GM12878 (cell line): ENCODE measurements at regions of chr18 and their contacts with region 1.

Region 1: GRCh38 chr18:57881818-57882413 is 78.8 kb upstream of the ATP8B1 start:
- DNase-seq: peak; percentile 32
- ATAC-seq: peak; percentile 98
- H3K4me3 ChIP-seq: no peak overlapping the region
- H3K27ac ChIP-seq: no peak overlapping the region
- H3K4me1 ChIP-seq: no peaks in the 10 kb centered on the region
- H3K27me3 ChIP-seq: no peaks in the 10 kb centered on the region
- CTCF ChIP-seq: peak; percentile 89 to 94 (median 90); a peak in 5 of 6 replicates
- EP300 ChIP-seq: no peak
- POLR2A ChIP-seq: no peak
- RAD21 ChIP-seq: peak; percentile 93

Region 2: GRCh38 chr18:57727952-57728807 is 153.7 kb before region 1 on chr18:
- CTCF ChIA-PET with region 1: no interaction called
- POLR2A ChIA-PET with region 1: no interaction called
- RAD21 ChIA-PET with region 1: no interaction called
- SMC1A ChIA-PET with region 1: no interaction called
- in situ Hi-C with region 1: no loop called
- intact Hi-C with region 1: no loop called
- DNase-seq: no peak
- ATAC-seq: no peak
- H3K4me3 ChIP-seq: no peak overlapping the region
- H3K27ac ChIP-seq: no peak overlapping the region
- H3K4me1 ChIP-seq: no peaks in the 10 kb centered on the region
- H3K27me3 ChIP-seq: no peaks in the 10 kb centered on the region
- CTCF ChIP-seq: no peak
- EP300 ChIP-seq: no peak
- POLR2A ChIP-seq: no peak
- RAD21 ChIP-seq: no peak

Region 3: DNA sequence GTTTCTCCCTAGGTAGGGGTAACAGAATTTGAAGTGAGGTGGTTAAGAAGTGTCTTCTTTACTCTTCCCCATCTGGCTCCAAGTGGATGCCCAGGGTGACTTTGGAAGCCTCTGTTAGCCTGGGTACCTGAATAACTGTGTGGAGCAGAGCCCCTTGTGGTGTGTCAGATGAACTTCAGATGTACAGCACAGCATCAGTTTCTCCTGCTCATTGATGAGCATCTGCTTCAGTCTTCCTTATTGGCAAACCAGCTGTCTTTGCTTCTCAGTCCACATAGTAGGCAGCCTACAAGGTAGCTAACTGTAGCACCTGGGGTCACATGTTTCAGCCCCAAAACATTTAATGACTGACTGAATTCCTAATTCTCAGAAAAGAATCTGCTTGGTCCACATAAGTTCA is 22.6 kb before region 1 on chr18:
- CTCF ChIA-PET with region 1: interaction called, 5 read pairs
- POLR2A ChIA-PET with region 1: interaction called, 10 read pairs
- RAD21 ChIA-PET with region 1: no interaction called
- SMC1A ChIA-PET with region 1: no interaction called
- in situ Hi-C with region 1: no loop called
- intact Hi-C with region 1: no loop called
- DNase-seq: no peak
- ATAC-seq: peak; percentile 88
- H3K4me3 ChIP-seq: no peak overlapping the region
- H3K27ac ChIP-seq: no peak overlapping the region
- H3K4me1 ChIP-seq: no peaks in the 10 kb centered on the region
- H3K27me3 ChIP-seq: peaks cover 0 to 5% of the 10 kb centered on the region in 2 experiments
- CTCF ChIP-seq: peak; percentile 55 to 69 (median 68)
- EP300 ChIP-seq: no peak
- POLR2A ChIP-seq: no peak
- RAD21 ChIP-seq: peak; percentile 73

Region 4: DNA sequence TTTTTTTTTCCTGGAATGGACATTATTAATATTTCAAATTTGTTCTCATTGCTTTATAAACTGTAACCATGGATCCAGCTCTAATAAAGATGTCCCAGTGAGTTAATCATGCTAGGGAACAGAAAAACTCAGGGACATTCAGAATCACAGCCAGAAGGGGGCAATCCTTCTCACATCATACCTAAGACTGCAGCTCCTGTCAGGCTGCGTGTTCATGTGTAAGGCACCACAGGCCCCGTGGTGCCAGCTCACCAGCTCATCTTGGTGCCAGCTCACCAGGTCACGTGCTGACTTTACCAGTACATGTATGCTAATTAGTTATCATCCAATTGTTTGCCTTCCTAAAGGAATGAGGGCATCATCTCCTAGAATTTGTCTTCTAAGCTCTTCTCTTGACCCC is 77.4 kb after region 1 on chr18:
- CTCF ChIA-PET with region 1: interaction called, 8 read pairs
- POLR2A ChIA-PET with region 1: no interaction called
- RAD21 ChIA-PET with region 1: interaction called, 10 read pairs
- SMC1A ChIA-PET with region 1: interaction called, 15 read pairs
- in situ Hi-C with region 1: no loop called
- intact Hi-C with region 1: no loop called
- DNase-seq: no peak
- ATAC-seq: peak; percentile 86
- H3K4me3 ChIP-seq: no peak overlapping the region
- H3K27ac ChIP-seq: no peak overlapping the region
- H3K4me1 ChIP-seq: no peaks in the 10 kb centered on the region
- H3K27me3 ChIP-seq: 0 out of 4 replicates have a peak, but pooled peaks cover 0 to 2% of the 10 kb centered on the region in 2 experiments
- CTCF ChIP-seq: peak; percentile 45 to 54 (median 49); a peak in 5 of 6 replicates
- EP300 ChIP-seq: no peak
- POLR2A ChIP-seq: no peak
- RAD21 ChIP-seq: 0 out of 2 replicates have a peak, but pooled peaks have one; percentile 27

Region 5: DNA sequence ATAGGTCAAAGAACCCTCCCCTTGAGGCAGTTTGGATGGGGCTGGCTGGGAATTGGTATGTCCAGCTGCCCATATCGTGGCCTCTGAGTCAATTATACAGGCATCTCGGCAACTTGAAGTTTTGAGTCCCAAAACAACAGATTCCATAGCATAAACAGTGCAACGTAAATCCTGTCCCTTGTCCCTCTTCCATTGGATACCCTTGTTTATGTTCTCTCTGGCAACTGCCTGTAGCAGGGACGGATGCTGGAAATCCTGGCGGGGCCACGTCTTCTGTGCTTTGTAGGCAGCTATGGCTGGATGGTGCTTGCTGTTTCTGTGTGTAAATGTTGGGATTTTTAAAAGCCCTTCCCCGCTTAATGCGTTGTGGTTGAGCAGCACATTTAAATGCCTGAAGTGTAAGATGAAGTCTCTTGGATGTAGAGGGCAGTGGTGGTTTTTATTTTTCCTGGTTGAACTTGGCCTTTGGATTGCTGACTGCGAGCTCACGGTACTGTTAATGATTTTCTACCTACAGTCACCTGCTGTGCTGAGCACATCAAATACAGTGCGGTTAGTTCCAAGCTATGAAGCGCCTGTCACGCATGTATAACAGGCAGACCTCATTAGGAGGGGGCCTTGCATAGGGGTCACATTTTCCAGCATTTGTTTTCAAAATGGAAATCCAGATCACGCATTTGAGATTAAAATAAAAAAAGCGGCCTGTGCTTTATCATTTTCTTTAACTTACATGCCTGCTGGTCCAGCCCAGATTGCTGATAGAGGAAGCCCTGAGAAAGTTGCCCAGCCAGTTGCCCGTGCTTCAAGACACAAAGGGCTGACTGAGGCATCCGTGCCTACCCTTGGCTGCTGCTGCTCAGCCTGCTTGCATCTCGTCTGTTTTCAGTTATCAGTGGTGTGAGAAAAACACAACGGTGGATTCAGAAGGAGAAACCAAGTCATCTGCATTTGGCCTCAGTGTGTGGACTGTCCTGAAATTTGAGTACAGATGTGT is 246.8 kb after region 1 on chr18:
- CTCF ChIA-PET with region 1: interaction called, 30 read pairs
- POLR2A ChIA-PET with region 1: no interaction called
- RAD21 ChIA-PET with region 1: no interaction called
- SMC1A ChIA-PET with region 1: interaction called, 4 read pairs
- in situ Hi-C with region 1: loop called (anchors 10 kb)
- intact Hi-C with region 1: loop called (anchors 5 kb)
- DNase-seq: no peak
- ATAC-seq: no peak
- H3K4me3 ChIP-seq: no peak overlapping the region
- H3K27ac ChIP-seq: no peak overlapping the region
- H3K4me1 ChIP-seq: no peaks in the 10 kb centered on the region
- H3K27me3 ChIP-seq: no peaks in the 10 kb centered on the region
- CTCF ChIP-seq: no peak
- EP300 ChIP-seq: no peak
- POLR2A ChIP-seq: no peak
- RAD21 ChIP-seq: no peak